ENCODE measurements at regions of chr7 and their contacts with region 1.

Region 1: GRCh38 chr7:152615031-152615741 is 60.8 kb downstream of the XRCC2 start:
- DNase-seq: no peak
- ATAC-seq: peak in 7 of 8 donors; percentile 17 to 78 (median 56)
- H3K4me3 ChIP-seq: peak overlapping the region in 2 of 10 donors; percentile 11 to 19
- H3K27ac ChIP-seq: no peak overlapping the region
- H3K4me1 ChIP-seq: peaks cover 0 to 5% (median 0%) of the 10 kb centered on the region in 9 donors
- H3K27me3 ChIP-seq: no peaks in the 10 kb centered on the region
- CTCF ChIP-seq: no peak

Region 2: GRCh38 chr7:152649220-152649619 is 34.0 kb after region 1 on chr7:
- intact Hi-C with region 1: loop called in 1 of 10 experiments (anchors 1 kb)
- DNase-seq: no peak
- ATAC-seq: no peak
- H3K4me3 ChIP-seq: no peak overlapping the region
- H3K27ac ChIP-seq: no peak overlapping the region
- H3K4me1 ChIP-seq: no peaks in the 10 kb centered on the region
- H3K27me3 ChIP-seq: no peaks in the 10 kb centered on the region
- CTCF ChIP-seq: no peak

Region 3: GRCh38 chr7:152894273-152895170 is 279.3 kb after region 1 on chr7:
- intact Hi-C with region 1: no loop called
- DNase-seq: no peak
- ATAC-seq: peak in 5 of 8 donors; percentile 35 to 73 (median 58)
- H3K4me3 ChIP-seq: no peak overlapping the region
- H3K27ac ChIP-seq: no peak overlapping the region
- H3K4me1 ChIP-seq: peaks cover 0 to 4% (median 0%) of the 10 kb centered on the region in 9 donors
- H3K27me3 ChIP-seq: peaks cover 0 to 24% (median 8%) of the 10 kb centered on the region in 7 donors
- CTCF ChIP-seq: peak; percentile 60 to 84 (median 77)